ENCODE measurements at regions of chr1 and their contacts with region 1.

Region 1: GRCh38 chr1:171801487-171801891 is 20.0 kb downstream of the METTL13 start:
- DNase-seq: no peak
- H3K4me3 ChIP-seq: no peak overlapping the region
- H3K27ac ChIP-seq: no peak overlapping the region
- H3K4me1 ChIP-seq: peaks cover 0 to 8% (median 4%) of the 10 kb centered on the region in 4 donors
- H3K27me3 ChIP-seq: no peaks in the 10 kb centered on the region
- CTCF ChIP-seq: peak; percentile 71 to 81 (median 76)
- EP300 ChIP-seq: no peak
- POLR2A ChIP-seq: no peak

Region 2: DNA sequence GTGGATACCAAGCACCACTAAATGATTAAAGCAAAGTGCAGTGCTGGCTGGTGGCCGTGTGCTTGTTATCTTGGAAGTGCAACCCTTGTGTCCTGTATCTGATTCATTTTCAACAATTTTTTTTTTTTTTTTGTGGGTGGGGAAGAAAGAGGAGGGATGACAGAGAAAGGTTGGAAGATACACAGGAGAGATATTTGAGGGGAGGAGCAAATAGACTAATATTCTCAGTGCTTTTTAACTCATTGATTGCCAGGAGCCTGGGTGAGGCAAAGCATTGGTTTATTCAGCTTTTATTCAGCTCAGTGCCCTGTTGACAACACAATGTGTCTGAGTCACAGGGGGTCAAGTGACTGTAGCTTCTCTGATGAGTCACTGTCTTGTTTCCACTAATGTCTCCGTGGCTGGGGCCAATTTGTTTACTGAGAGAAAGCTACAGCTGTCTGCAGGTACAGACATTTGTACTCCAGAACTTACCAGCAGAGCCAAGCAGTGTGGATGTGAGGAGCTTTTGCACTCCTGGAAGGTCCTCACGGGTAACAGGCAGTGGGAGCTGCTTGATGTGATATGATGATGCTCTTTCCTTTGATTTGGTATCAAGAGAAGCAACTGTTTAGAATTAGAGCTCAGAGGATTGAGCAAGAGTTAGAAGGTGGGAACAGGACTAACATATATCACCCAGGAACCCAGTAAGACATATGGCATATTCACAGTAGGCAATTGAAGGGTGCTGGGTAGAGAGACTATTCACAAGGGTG is 16.2 kb after region 1 on chr1:
- intact Hi-C with region 1: no loop called
- DNase-seq: no peak
- H3K4me3 ChIP-seq: no peak overlapping the region
- H3K27ac ChIP-seq: no peak overlapping the region
- H3K4me1 ChIP-seq: peaks cover 0 to 7% (median 6%) of the 10 kb centered on the region in 4 donors
- H3K27me3 ChIP-seq: no peaks in the 10 kb centered on the region
- CTCF ChIP-seq: no peak
- EP300 ChIP-seq: no peak
- POLR2A ChIP-seq: no peak

Region 3: DNA sequence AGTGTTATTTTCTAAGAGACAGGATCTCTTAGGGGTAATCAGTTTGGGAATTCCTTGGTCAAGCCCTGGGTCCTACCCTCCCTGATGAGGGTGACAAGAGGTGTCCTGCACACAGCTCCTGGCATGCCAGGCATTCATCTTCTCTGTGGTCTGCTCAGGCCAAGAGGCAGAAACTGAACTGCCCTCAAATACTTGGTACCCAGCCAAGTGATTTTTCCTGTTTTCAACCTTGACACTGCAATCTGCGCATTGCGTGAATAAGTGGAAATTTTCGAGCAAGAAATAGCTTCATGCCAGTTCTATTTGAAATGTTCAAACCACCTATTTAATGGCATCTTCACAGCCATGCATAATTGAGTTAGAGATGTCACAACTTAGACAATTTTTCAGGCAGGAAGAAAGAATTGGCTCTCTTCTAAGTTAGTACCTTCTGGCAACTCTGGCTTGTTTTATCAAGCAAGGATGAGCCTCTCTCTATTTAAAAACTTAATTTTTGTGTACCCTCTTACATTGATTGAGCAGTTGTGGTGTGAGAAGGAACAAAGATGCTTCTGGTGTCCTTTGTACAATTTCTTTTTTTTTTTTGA is 66.8 kb after region 1 on chr1:
- intact Hi-C with region 1: loop called (anchors 10 kb)
- DNase-seq: no peak
- H3K4me3 ChIP-seq: no peak overlapping the region
- H3K27ac ChIP-seq: no peak overlapping the region
- H3K4me1 ChIP-seq: no peaks in the 10 kb centered on the region
- H3K27me3 ChIP-seq: no peaks in the 10 kb centered on the region
- CTCF ChIP-seq: no peak
- EP300 ChIP-seq: no peak
- POLR2A ChIP-seq: no peak

Region 4: DNA sequence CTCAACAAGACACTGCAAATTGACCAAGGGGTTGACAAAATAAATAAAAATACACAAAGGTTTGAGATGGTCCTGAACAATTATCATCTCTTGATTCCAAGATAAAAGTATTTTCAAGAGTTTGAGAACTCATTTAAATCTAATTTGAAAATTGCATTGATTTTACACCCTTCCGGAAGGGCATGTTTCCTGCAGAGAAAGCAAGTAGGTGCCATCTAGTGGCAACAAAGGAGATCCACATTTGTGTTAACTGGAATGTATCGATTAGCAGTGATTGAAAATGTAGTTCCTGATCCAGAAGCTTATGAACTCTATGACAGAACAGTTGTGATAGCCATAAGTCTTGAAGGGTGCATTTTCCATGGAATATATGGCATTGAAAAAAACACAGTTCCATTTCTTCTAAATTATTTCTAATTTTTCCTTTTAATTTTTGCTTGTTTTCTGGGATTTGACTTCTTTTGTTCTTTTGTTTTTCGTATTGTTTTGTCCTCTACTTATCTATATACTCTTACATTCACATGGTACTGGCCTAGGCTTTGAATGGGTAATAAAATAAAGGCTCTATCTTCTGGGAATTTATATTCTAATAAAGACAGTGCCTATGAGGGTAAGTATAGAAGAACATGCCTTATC is 183.5 kb after region 1 on chr1:
- intact Hi-C with region 1: loop called (anchors 1 kb)
- DNase-seq: no peak
- H3K4me3 ChIP-seq: no peak overlapping the region
- H3K27ac ChIP-seq: no peak overlapping the region
- H3K4me1 ChIP-seq: peaks cover 0 to 7% (median 3%) of the 10 kb centered on the region in 4 donors
- H3K27me3 ChIP-seq: no peaks in the 10 kb centered on the region
- CTCF ChIP-seq: peak; percentile 67 to 80 (median 70)
- EP300 ChIP-seq: no peak
- POLR2A ChIP-seq: no peak

Region 5: GRCh38 chr1:172401892-172402291 is 600.4 kb after region 1 on chr1:
- intact Hi-C with region 1: no loop called
- DNase-seq: no peak
- H3K4me3 ChIP-seq: no peak overlapping the region
- H3K27ac ChIP-seq: no peak overlapping the region
- H3K4me1 ChIP-seq: peaks cover 27 to 44% (median 38%) of the 10 kb centered on the region in 4 donors
- H3K27me3 ChIP-seq: no peaks in the 10 kb centered on the region
- CTCF ChIP-seq: no peak
- EP300 ChIP-seq: no peak
- POLR2A ChIP-seq: no peak